Activated T-helper 1 cell treated with anti-CD3 and anti-CD28 coated beads, Interleukin-12 subunit alpha, Interleukin-12 subunit beta, Interleukin-2, Interleukin-4 antibody, amounts not matched to agents 30 ng/mL and 10 ng/mL and 1 ng/mL, durations not matched to agents 14 hours and 24 hours and 36 hours (primary cell): ENCODE measurements at regions of chr13 and their contacts with region 1.

Region 1: GRCh38 chr13:21176220-21176982 is at the starts of genes MRPL57 and SKA3:
- DNase-seq: peak; percentile 95
- H3K4me3 Mint-ChIP-seq: peak within 1 kb of the TSS; percentile 98
- H3K27ac Mint-ChIP-seq: peak within 1 kb of the TSS; percentile 96
- H3K4me1 Mint-ChIP-seq: peaks cover 34% of the 10 kb centered on the region
- H3K27me3 Mint-ChIP-seq: no peaks in the 10 kb centered on the region
- total RNA-seq, gene MRPL57: 31.4 and 33.3 TPM in 2 replicates
- total RNA-seq, gene SKA3: 29.4 and 32.4 TPM in 2 replicates

Region 2: GRCh38 chr13:20703780-20704445 is 472.5 kb before region 1 on chr13:
- intact Hi-C with region 1: loop called (anchors 10 kb)
- DNase-seq: peak; percentile 65
- H3K4me3 Mint-ChIP-seq: no peak overlapping the region
- H3K27ac Mint-ChIP-seq: no peak overlapping the region
- H3K4me1 Mint-ChIP-seq: peaks cover 5% of the 10 kb centered on the region
- H3K27me3 Mint-ChIP-seq: peaks cover 40% of the 10 kb centered on the region

Region 3: DNA sequence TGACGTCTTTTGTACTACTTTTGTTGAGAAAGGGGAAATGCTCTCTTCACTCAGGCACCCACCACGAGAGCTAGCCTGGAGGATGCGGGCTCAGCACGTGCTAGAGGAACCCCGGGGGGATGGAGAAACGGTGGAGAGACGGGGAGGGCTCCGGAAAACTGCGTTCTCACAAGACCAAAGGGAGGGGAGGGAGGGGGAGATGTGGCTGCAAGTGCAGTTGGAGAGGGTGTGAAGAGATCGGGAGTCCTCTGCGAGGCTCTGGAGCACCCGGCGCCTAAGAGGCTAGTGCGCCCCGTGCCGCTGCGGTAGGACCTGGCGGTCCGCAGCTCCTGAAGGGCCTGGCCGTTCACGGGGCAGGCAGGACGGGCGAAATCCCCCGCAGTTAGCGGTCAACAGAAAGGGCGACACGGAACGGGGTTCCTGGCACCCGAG is 230.4 kb before region 1 on chr13:
- intact Hi-C with region 1: loop called (anchors 1 kb)
- DNase-seq: no peak
- H3K4me3 Mint-ChIP-seq: peak overlapping the region; percentile 34
- H3K27ac Mint-ChIP-seq: no peak overlapping the region
- H3K4me1 Mint-ChIP-seq: peaks cover 6% of the 10 kb centered on the region
- H3K27me3 Mint-ChIP-seq: peaks cover 36% of the 10 kb centered on the region

Region 4: DNA sequence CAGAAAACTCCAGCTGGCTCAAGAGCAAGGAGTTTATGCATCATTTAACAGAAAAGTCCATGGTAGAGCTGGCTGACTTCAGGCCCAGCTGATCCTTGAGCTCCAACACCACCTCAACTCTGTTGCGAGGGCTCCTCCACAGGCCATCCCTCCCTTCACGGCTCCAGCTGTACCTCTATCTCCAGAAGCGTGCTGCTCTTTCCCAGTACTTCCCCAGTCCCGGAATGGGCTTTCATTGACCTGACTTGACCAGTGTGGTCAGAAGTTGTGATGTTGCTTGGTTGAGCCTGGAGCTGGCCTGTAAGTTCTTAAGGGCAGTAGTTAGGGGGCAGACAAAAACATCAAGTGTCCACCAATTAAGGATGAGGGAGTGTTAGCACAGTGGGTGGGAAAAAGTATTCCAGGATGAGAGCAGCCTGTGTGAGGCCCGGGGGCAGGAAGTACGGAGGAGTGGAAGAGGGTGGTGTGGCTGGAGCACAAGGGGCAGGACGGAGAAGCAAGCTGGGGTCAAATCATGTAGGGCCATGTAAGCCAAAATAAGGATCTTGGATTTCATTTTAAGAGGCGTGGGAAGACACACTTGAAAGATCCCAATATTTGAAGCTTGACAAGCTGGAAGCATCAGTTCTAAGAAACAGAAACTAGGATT is 24.0 kb before region 1 on chr13:
- intact Hi-C with region 1: no loop called
- DNase-seq: no peak
- H3K4me3 Mint-ChIP-seq: no peak overlapping the region
- H3K27ac Mint-ChIP-seq: peak overlapping the region; percentile 2
- H3K4me1 Mint-ChIP-seq: no peaks in the 10 kb centered on the region
- H3K27me3 Mint-ChIP-seq: no peaks in the 10 kb centered on the region

Region 5: GRCh38 chr13:21232196-21232595 is 55.8 kb after region 1 on chr13:
- intact Hi-C with region 1: loop called (anchors 1 kb)
- DNase-seq: no peak
- H3K4me3 Mint-ChIP-seq: peak overlapping the region; percentile 19
- H3K27ac Mint-ChIP-seq: peak overlapping the region; percentile 35
- H3K4me1 Mint-ChIP-seq: peaks cover 26% of the 10 kb centered on the region
- H3K27me3 Mint-ChIP-seq: peaks cover 6% of the 10 kb centered on the region

Region 6: GRCh38 chr13:21557995-21558394 is 381.6 kb after region 1 on chr13:
- intact Hi-C with region 1: no loop called
- DNase-seq: no peak
- H3K4me3 Mint-ChIP-seq: no peak overlapping the region
- H3K27ac Mint-ChIP-seq: no peak overlapping the region
- H3K4me1 Mint-ChIP-seq: no peaks in the 10 kb centered on the region
- H3K27me3 Mint-ChIP-seq: no peaks in the 10 kb centered on the region